ENCODE measurements at regions of chr1 and their contacts with region 1.

Region 1: GRCh38 chr1:97524211-97524610 is 396.6 kb downstream of the DPYD start:
- DNase-seq: no peak
- ATAC-seq: no peak

Region 2: DNA sequence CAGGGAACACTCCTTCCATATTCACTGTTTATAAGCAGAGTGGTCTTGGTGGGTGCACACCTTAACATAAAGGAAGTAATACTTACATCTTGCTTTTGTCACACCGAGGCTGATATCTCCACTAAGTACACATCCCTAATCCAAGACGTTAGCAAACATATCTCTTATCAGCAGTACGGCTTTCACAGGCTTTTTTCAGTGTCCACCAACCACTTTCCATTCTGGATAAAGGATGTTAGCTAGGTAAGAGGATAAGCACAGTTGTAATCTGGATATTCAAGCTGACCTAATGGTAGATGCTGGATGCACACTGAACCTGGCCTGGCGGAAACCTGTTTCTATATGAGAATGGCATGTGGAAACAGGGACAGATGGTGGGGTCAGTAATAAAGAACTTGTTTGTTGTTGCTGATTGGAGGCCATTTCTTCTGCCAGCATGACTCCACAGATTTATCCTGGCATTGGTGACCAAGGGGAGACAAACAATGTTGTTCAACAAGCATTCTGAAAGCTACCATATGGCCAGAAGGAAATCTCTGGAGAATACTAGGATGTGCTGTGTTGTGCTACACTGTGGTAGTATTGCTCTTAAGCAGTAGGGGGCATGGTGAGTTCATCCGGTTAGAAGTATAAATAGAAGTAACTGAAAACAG is 386.2 kb before region 1 on chr1:
- intact Hi-C with region 1: loop called in 1 of 2 experiments (anchors 10 kb)
- DNase-seq: no peak
- ATAC-seq: peak in 1 of 2 donors; percentile 95

Region 3: GRCh38 chr1:97252076-97252475 is 272.1 kb before region 1 on chr1:
- intact Hi-C with region 1: loop called in 1 of 2 experiments (anchors 1 kb)
- DNase-seq: peak; percentile 27
- ATAC-seq: peak; percentile 70 to 74

Region 4: GRCh38 chr1:97270508-97271307 is 253.5 kb before region 1 on chr1:
- intact Hi-C with region 1: no loop called
- DNase-seq: no peak
- ATAC-seq: peak in 1 of 2 donors; percentile 87

Region 5: GRCh38 chr1:97593192-97593591 is 69.0 kb after region 1 on chr1:
- intact Hi-C with region 1: no loop called
- DNase-seq: no peak
- ATAC-seq: no peak